ENCODE measurements at regions of chr9 and their contacts with region 1.

Region 1: GRCh38 chr9:96491079-96491879 is 41.3 kb downstream of the HABP4 start:
- DNase-seq: no peak
- ATAC-seq: peak in 1 of 2 donors; percentile 15
- H3K4me3 ChIP-seq: no peak overlapping the region
- H3K27ac ChIP-seq: no peak overlapping the region
- H3K4me1 ChIP-seq: peaks cover 13% of the 10 kb centered on the region
- H3K27me3 ChIP-seq: no peaks in the 10 kb centered on the region

Region 2: GRCh38 chr9:96449845-96450612 is 41.2 kb before region 1 on chr9 and contains the start of gene HABP4:
- intact Hi-C with region 1: no loop called
- DNase-seq: peak; percentile 98 to 100 (median 99)
- ATAC-seq: peak; percentile 99
- H3K4me3 ChIP-seq: peak within 1 kb of the TSS; percentile 70
- H3K27ac ChIP-seq: peak within 1 kb of the TSS; percentile 89
- H3K4me1 ChIP-seq: no peaks in the 10 kb centered on the region
- H3K27me3 ChIP-seq: no peaks in the 10 kb centered on the region
- total RNA-seq, gene HABP4: 17.1 to 21.7 (median 18.5) TPM

Region 3: DNA sequence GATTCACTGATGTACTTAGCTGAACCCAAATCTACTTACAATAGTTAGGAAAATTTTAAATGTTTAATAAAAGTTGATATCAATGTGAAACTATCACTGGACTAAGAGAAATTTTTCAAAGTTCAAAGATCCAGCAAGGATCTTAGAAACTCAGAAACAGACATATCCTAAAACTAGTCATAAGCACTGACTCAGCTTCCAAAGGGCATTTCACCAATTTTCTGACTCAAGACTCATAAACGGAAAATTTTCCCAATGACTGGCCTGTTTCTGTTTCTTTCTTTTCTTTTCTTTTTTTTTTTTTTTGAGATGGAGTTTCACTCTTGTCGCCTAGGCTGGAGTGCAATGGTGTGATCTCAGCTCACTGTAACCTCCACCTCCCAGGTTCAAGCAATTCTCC is 61.8 kb after region 1 on chr9:
- intact Hi-C with region 1: loop called in 1 of 4 experiments (anchors 10 kb)
- DNase-seq: no peak
- ATAC-seq: no peak
- H3K4me3 ChIP-seq: no peak overlapping the region
- H3K27ac ChIP-seq: no peak overlapping the region
- H3K4me1 ChIP-seq: no peaks in the 10 kb centered on the region
- H3K27me3 ChIP-seq: no peaks in the 10 kb centered on the region

Region 4: DNA sequence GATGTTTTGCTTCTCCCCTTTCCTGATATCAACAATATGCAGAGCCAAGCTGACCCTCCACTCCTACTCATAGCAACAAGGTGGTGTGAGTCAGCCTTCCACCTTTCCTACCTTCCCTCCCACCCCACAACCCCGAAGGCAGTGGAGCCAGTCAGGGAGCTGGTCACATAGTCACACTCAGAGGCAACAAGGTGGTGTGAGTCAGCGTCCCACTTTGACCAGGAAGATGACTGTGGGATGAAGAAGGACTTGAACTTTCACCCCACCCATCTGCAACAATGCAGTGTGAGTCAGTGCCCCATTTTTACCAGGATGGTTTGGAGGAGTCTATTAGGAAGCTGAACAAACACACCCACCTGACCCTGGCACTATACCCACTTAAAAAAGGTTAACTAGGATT is 393.2 kb after region 1 on chr9:
- intact Hi-C with region 1: no loop called
- DNase-seq: no peak
- ATAC-seq: no peak
- H3K4me3 ChIP-seq: no peak overlapping the region
- H3K27ac ChIP-seq: no peak overlapping the region
- H3K4me1 ChIP-seq: no peaks in the 10 kb centered on the region
- H3K27me3 ChIP-seq: no peaks in the 10 kb centered on the region

Region 5: DNA sequence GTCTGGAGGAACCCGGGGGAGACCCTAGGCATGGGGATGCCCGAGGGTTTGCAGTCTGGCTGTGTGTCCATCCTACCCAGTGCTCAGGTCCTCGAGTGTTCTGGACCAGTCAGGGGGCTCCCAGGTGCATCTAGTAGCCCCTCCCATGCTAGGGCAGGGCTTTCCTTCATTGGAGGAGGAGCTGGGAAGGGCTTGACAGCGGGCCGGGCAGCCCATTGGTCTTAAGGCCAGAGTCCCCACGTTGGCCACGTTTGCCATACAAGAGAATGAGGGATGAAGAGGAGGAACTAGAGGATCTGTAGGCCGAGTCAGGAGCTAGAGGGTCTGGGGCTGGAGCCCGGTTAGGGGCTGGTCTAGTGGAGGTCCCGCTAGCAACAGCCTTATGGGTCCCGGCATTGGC is 585.0 kb after region 1 on chr9:
- intact Hi-C with region 1: no loop called
- DNase-seq: no peak
- ATAC-seq: no peak
- H3K4me3 ChIP-seq: no peak overlapping the region
- H3K27ac ChIP-seq: no peak overlapping the region
- H3K4me1 ChIP-seq: no peaks in the 10 kb centered on the region
- H3K27me3 ChIP-seq: no peaks in the 10 kb centered on the region